ENCODE measurements at regions of chr16 and their contacts with region 1.

Region 1: GRCh38 chr16:85330694-85331188 is 218.5 kb upstream of the CIBAR2 start:
- DNase-seq: peak; percentile 71
- ATAC-seq: peak; percentile 88
- H3K4me3 ChIP-seq: no peak overlapping the region
- H3K27ac ChIP-seq: no peak overlapping the region
- H3K4me1 ChIP-seq: peaks cover 19% of the 10 kb centered on the region
- H3K27me3 ChIP-seq: no peaks in the 10 kb centered on the region
- CTCF ChIP-seq: peak; percentile 49

Region 2: DNA sequence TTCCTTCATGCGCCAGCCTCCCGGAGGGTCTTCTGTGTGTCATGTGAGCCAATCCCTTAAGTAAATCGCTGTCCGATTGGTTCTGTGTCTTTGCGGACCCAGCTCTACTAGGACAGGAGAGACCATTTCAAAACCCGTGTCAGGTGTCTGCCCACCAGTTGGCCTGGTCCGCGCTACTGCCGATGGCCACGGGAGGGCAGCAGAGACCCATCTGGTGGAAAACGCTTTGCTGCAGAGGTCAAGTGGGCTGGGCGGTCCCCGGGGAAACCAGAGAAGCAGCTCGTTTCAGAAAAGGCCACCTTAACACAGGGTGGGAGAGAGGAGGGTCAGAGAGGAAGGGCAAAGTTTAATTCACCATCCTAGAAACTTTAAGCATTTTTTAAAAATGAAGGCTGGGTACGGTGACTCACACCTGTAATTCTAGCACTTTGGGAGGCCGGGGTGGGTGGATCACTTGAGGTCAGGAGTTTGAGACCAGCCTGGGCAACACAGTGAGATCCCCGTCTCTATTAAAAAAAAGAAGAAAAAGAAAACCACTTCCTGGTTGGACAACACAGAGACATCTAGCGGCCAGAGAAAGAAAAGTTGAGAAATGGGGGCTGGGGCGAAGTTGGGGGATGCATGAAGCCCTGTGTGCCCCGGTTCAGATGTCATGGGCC is 215.7 kb before region 1 on chr16:
- CTCF ChIA-PET with region 1: no interaction called
- POLR2A ChIA-PET with region 1: no interaction called
- intact Hi-C with region 1: loop called (anchors 10 kb)
- DNase-seq: peak; percentile 87
- ATAC-seq: peak; percentile 96
- H3K4me3 ChIP-seq: no peak overlapping the region
- H3K27ac ChIP-seq: no peak overlapping the region
- H3K4me1 ChIP-seq: peaks cover 2% of the 10 kb centered on the region; the same call in 1 of the 2 replicates
- H3K27me3 ChIP-seq: no peaks in the 10 kb centered on the region
- CTCF ChIP-seq: peak; percentile 92